ENCODE measurements at regions of chr7 and their contacts with region 1.

Region 1: DNA sequence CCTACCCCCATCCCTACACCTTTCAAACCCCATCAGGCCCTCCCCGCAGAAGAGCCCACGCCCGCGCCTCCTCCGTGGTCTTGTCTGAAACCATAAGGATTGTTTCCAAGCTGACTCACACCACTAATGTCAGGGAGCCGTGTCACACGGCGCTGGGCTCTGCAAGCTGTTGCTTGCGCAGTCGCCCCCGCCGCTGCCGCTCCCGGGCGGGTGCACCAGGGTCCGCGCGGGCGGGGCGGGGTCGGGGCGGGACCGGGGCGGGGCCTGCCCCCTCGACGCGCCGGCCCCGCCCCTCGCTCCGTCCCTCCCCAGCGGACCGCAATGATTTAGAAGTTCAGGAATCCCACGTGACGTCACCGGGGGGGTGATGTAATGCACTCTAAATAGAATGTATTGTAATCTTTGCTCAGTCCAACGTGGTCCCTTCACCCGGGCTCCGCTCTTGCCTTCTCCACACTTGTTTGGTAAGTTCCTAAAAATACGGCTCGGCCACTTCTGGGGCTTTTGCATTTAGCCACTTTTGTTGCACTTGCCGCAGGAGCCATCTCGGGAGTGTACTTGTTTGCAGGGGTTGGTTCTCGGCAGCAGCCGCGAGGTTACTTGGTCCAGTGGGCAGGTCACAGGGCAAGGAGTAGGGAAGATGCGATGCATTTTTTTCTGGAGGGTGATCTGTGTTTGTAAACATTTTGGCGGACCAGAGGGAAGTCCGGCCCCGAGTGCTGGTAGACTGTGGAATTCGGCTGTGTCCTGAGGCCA is 3.2 kb upstream of the CREB5 start:
- DNase-seq: no peak
- ATAC-seq: peak; percentile 60
- H3K4me3 ChIP-seq: peak overlapping the region; percentile 53
- H3K27ac ChIP-seq: no peak overlapping the region
- H3K4me1 ChIP-seq: 0 out of 2 replicates have a peak, but pooled peaks cover 2% of the 10 kb centered on the region
- H3K27me3 ChIP-seq: peaks cover 0 to 14% of the 10 kb centered on the region in 2 experiments; a peak in 2 of 4 replicates
- CTCF ChIP-seq: no peak
- EP300 ChIP-seq: 0 out of 4 replicates have a peak, but pooled peaks of 1 of the 2 experiments have one; percentile 33
- POLR2A ChIP-seq: no peak
- RAD21 ChIP-seq: no peak

Region 2: DNA sequence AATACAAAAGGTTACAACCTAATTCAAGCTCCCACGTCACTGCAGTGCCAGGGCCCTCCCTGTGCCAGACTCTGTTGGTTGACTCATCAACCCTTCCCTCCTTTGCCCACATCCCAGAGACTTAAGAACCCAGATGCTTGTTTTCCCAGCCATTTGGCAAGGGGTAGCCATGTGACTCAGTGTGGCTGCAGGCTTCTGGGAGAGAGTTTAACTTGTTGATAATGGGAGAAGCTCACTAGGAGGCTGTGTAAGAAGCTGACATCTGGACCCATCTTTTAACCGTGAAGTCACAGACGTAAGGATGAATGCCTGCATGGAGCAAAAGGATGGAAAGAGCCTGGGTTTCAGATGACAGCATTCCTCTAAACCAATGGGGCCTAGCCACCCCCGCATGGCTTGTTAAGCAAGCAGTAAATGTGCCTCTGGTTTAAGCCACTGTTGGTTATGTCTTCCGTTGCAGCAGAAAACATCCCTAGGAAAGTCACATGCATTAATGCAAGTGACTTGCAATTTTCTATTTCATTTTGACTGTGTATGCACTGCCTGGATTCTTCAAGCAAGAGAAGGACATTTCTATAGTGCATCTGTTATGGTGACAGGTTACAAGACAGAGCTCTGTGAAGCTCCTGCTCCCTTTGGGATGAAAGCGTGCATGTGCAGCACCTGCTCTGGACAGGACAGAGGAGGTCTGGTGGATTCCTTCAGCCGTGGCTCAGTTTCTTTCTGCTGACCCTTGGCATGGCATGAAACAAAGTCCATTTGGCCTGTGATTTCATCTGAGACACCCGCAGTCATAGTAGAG is 54.3 kb before region 1 on chr7:
- CTCF ChIA-PET with region 1: no interaction called
- POLR2A ChIA-PET with region 1: no interaction called
- RAD21 ChIA-PET with region 1: no interaction called
- SMC1A ChIA-PET with region 1: no interaction called
- in situ Hi-C with region 1: no loop called
- intact Hi-C with region 1: no loop called
- DNase-seq: no peak
- ATAC-seq: no peak
- H3K4me3 ChIP-seq: no peak overlapping the region
- H3K27ac ChIP-seq: no peak overlapping the region
- H3K4me1 ChIP-seq: no peaks in the 10 kb centered on the region
- H3K27me3 ChIP-seq: no peaks in the 10 kb centered on the region
- CTCF ChIP-seq: no peak
- EP300 ChIP-seq: no peak
- POLR2A ChIP-seq: no peak
- RAD21 ChIP-seq: no peak

Region 3: GRCh38 chr7:28433699-28434219 is 24.6 kb after region 1 on chr7:
- CTCF ChIA-PET with region 1: interaction called, 3 read pairs
- POLR2A ChIA-PET with region 1: no interaction called
- RAD21 ChIA-PET with region 1: interaction called, 10 read pairs
- SMC1A ChIA-PET with region 1: interaction called, 13 read pairs
- in situ Hi-C with region 1: no loop called
- intact Hi-C with region 1: no loop called
- DNase-seq: no peak
- ATAC-seq: peak; percentile 49
- H3K4me3 ChIP-seq: no peak overlapping the region
- H3K27ac ChIP-seq: no peak overlapping the region
- H3K4me1 ChIP-seq: no peaks in the 10 kb centered on the region
- H3K27me3 ChIP-seq: no peaks in the 10 kb centered on the region
- CTCF ChIP-seq: no peak
- EP300 ChIP-seq: no peak
- POLR2A ChIP-seq: no peak
- RAD21 ChIP-seq: no peak

Region 4: DNA sequence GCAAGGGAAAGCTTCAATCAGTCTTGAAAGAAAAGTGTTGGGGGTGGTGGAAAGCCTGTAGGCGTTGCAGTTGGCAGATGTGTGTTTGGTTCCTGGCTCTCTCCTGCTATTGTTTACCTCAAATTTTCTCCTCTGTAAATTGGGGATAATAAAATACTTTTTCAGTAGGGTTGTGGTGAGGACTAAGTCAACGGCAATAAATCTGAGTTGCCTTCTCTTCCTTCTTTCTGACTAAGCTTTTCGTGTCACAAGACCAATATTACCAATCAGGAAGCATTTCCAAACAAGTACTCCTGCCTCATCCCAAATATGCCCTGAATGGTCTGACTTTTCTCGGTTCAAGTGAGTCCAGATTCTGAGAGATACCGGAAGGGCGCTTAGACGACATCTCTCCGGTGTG is 57.2 kb after region 1 on chr7:
- CTCF ChIA-PET with region 1: interaction called, 5 read pairs
- POLR2A ChIA-PET with region 1: interaction called, 5 read pairs
- RAD21 ChIA-PET with region 1: interaction called, 9 read pairs
- SMC1A ChIA-PET with region 1: interaction called, 21 read pairs
- in situ Hi-C with region 1: no loop called
- intact Hi-C with region 1: no loop called
- DNase-seq: no peak
- ATAC-seq: no peak
- H3K4me3 ChIP-seq: no peak overlapping the region
- H3K27ac ChIP-seq: no peak overlapping the region
- H3K4me1 ChIP-seq: no peaks in the 10 kb centered on the region
- H3K27me3 ChIP-seq: no peaks in the 10 kb centered on the region
- CTCF ChIP-seq: no peak
- EP300 ChIP-seq: no peak
- POLR2A ChIP-seq: no peak
- RAD21 ChIP-seq: no peak

Region 5: GRCh38 chr7:28536259-28536658 is 127.1 kb after region 1 on chr7:
- CTCF ChIA-PET with region 1: interaction called, 5 read pairs
- POLR2A ChIA-PET with region 1: interaction called, 7 read pairs
- RAD21 ChIA-PET with region 1: interaction called, 56 read pairs
- SMC1A ChIA-PET with region 1: interaction called, 15 read pairs
- in situ Hi-C with region 1: no loop called
- intact Hi-C with region 1: loop called (anchors 1 kb)
- DNase-seq: no peak
- ATAC-seq: no peak
- H3K4me3 ChIP-seq: no peak overlapping the region
- H3K27ac ChIP-seq: no peak overlapping the region
- H3K4me1 ChIP-seq: peaks cover 17% of the 10 kb centered on the region
- H3K27me3 ChIP-seq: no peaks in the 10 kb centered on the region
- CTCF ChIP-seq: no peak; a peak in 1 of 6 replicates
- EP300 ChIP-seq: no peak
- POLR2A ChIP-seq: no peak
- RAD21 ChIP-seq: no peak

Region 6: DNA sequence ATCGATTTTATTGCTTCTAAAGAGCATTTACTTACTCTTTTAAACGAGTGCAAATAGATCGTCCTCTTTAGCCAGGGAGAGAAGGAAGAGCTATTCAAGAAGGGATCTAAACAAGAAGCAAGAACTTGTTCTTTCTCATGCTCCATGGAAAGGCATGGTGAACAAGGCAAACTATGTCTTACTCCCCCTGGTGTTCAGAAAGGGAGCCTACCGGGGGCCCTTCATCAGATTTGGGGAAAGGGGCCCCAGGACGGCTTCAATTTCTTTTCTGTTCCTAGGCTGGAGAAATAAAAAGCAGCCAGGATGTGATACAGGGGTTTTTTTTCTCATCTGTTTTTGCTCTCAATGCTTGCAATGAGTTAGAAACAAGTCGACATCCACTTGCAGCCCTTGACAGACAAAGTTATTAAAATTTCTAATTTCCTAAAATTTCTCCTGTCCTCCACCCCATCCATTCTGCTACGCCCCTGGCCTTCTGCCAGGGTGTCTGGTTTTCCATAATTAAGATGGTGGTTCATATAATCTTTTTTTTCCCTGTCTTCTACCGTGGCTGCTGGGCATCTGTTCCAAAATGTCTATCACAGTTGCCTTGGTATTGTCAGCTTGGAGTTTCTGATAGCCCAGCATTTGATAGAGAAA is 217.6 kb after region 1 on chr7:
- CTCF ChIA-PET with region 1: interaction called, 16 read pairs
- POLR2A ChIA-PET with region 1: interaction called, 5 read pairs
- RAD21 ChIA-PET with region 1: interaction called, 38 read pairs
- SMC1A ChIA-PET with region 1: interaction called, 25 read pairs
- in situ Hi-C with region 1: no loop called
- intact Hi-C with region 1: loop called (anchors 2 kb)
- DNase-seq: no peak
- ATAC-seq: peak; percentile 57
- H3K4me3 ChIP-seq: no peak overlapping the region
- H3K27ac ChIP-seq: no peak overlapping the region
- H3K4me1 ChIP-seq: peaks cover 3% of the 10 kb centered on the region; the same call in 1 of the 2 replicates
- H3K27me3 ChIP-seq: no peaks in the 10 kb centered on the region
- CTCF ChIP-seq: peak; percentile 50 to 70 (median 67)
- EP300 ChIP-seq: no peak
- POLR2A ChIP-seq: no peak
- RAD21 ChIP-seq: peak; percentile 74

Measured in GM12878 (cell line).